ENCODE measurements at regions of chr15 and their contacts with region 1.

Region 1: DNA sequence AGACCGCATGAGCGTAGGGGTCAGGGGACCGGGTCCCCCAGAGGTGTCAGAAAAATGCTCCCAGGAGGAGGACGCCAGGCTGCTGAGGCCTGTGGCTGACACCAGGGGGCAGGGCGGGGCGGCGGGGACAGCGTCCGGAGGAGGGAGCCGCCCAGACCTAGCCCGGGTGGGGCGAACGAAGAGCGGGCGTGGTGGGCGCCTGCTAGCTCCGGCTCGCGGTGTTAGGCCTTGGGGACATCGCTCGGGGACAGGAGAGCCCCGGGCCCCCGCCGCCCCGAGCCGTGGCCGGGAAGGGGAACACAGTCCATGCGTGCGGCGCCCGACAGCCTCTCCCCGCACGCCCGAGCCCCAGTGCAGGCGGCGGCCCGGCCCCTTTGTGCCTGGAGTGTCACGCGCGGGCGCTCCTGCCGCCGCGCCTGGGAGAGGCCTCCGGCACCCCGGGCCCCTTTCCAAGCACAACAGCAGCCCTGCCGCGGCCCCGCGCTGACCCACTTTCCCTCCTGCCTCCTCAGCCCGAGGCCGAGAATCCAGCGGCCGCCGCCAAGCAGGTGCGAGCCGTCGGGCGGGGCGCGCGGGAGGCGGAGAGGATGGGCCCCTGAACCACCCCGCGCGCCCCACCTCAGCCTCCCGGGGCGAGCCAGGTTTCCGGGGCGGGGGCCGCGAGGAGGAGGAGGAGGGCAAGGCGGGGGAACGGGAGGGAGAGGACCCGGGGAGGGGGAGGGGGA is 111.0 kb upstream of the KLF13 start:
- DNase-seq: peak; percentile 86
- ATAC-seq: peak; percentile 80
- H3K4me3 Mint-ChIP-seq: peak overlapping the region; percentile 88
- H3K27ac Mint-ChIP-seq: peak overlapping the region; percentile 93
- H3K4me1 Mint-ChIP-seq: peaks cover 44% of the 10 kb centered on the region
- H3K27me3 Mint-ChIP-seq: no peaks in the 10 kb centered on the region
- CTCF ChIP-seq: no peak

Region 2: GRCh38 chr15:31145271-31145911 is 70.3 kb before region 1 on chr15:
- CTCF ChIA-PET with region 1: no interaction called
- POLR2A ChIA-PET with region 1: no interaction called
- intact Hi-C with region 1: no loop called
- DNase-seq: no peak
- ATAC-seq: no peak
- H3K4me3 Mint-ChIP-seq: no peak overlapping the region
- H3K27ac Mint-ChIP-seq: no peak overlapping the region
- H3K4me1 Mint-ChIP-seq: no peaks in the 10 kb centered on the region
- H3K27me3 Mint-ChIP-seq: peaks cover 2% of the 10 kb centered on the region
- CTCF ChIP-seq: no peak

Region 3: DNA sequence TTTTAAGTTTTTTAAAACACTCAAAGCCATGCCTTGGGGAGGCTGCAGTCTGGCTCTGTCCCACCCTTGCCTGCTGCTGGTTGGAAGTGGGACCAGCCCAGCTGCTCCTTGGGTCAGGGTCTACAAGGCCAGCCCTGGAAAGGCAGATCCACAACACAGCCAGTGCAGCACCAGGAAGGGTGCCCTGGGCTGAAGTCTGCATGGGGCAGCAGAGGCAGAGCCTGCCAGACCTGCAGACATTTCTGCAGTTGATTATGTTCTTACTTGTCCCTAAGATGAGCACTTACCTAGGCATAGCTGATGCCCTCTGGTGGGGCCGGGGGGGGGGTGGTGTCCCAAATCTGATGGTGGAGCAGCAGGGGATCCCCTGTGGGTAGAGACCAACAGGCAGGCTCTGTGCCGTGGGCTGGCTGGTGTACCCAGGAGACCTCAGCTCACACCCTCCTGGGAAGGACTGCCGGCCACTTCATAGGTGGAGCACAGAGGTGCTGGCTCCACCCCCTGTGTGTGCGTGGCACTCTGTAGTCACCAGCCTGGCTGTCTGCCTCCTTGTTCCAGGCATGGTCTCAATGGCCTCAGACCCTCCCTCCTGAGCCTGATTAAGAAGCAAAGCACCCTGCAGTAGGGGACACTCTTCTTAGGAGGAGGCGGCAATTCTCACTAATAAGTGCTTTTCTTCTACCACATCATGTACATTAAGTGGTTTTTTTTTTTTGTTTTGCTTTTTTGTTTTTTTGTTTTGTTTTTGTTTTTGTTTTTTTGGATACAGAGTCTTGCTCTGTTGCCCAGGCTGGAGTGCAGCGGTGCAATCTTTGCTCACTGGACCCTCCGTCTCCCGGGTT is 13.6 kb after region 1 on chr15:
- CTCF ChIA-PET with region 1: interaction called, 25 read pairs
- POLR2A ChIA-PET with region 1: interaction called, 47 read pairs
- intact Hi-C with region 1: loop called (anchors 1 kb)
- DNase-seq: peak; percentile 52
- ATAC-seq: peak; percentile 64
- H3K4me3 Mint-ChIP-seq: peak overlapping the region; percentile 85
- H3K27ac Mint-ChIP-seq: peak overlapping the region; percentile 98
- H3K4me1 Mint-ChIP-seq: peaks cover 96% of the 10 kb centered on the region
- H3K27me3 Mint-ChIP-seq: no peaks in the 10 kb centered on the region
- CTCF ChIP-seq: no peak

Region 4: DNA sequence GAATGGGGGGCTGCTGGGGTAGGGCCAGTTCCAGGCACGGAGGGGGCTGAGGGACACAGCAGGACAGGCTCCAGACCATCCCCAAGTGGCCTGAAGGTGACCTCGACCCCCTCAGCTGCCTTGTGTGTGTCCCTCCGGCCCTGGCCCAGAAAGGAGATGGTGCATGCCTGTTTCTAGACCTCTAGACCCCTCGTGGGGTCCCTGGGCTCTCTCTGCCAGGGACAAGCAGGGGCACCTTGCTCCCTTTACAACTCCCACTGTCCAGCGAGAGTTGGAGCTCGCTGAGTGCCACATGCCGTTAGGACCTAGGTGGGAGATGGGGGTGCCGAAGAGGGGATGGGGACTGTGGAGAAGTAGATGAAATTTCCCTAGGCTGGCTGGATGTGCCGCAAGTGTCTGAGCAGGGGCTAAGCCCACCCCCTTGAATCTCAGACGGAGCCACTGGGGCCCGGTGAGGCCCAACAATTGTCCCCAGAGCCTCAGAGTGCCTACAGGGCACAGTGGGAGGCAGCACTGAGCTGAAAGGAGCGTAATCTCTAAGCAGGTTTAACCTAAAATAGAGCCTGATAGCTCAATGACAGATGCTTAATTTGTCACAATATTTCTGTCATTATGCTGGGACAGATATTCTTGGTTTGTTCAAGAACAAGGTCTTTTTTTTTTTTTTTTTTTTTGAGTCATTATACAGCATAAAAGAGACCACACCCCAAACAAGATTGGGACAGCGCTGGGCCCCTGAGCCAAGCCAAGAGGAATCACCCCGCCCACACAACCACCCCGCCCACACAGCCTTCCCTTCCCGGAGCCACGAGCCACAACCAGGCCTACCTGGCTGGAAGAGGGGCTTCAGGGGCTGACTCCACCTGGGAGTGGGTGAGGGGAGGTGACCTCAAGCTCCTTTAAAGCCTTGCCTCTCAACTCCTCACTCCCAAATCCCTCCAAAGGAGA is 87.4 kb after region 1 on chr15:
- CTCF ChIA-PET with region 1: interaction called, 16 read pairs
- POLR2A ChIA-PET with region 1: interaction called, 9 read pairs
- intact Hi-C with region 1: loop called (anchors 1 kb)
- DNase-seq: no peak
- ATAC-seq: peak; percentile 38
- H3K4me3 Mint-ChIP-seq: no peak overlapping the region
- H3K27ac Mint-ChIP-seq: peak overlapping the region; percentile 24
- H3K4me1 Mint-ChIP-seq: peaks cover 40% of the 10 kb centered on the region
- H3K27me3 Mint-ChIP-seq: no peaks in the 10 kb centered on the region
- CTCF ChIP-seq: no peak

Region 5: DNA sequence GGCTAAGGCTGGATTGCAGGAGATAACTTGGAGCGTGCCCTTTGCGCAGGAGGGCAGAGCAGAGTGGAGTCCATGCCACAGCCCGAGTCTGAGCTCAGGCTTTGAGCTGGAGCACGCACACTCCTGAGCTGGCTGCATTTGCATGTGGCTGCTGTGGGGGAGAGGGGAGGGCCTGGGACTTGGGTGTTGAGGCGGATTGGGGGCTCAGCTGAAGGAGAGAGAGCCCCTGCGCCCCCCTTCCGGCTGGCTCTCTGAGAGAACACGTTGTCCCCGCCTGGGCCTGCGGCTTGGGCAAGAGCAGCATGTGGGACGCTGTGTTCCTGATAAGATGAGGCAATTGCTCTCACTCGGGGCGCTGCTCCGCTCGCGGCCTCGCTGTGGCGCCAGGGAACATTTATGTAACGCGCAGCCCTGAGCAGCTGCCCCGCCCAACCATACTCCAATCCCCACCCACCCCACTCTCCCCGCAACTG is 150.0 kb after region 1 on chr15:
- CTCF ChIA-PET with region 1: interaction called, 10 read pairs
- POLR2A ChIA-PET with region 1: interaction called, 7 read pairs
- intact Hi-C with region 1: loop called (anchors 1 kb)
- DNase-seq: peak; percentile 48
- ATAC-seq: peak; percentile 48
- H3K4me3 Mint-ChIP-seq: peak overlapping the region; percentile 67
- H3K27ac Mint-ChIP-seq: peak overlapping the region; percentile 66
- H3K4me1 Mint-ChIP-seq: peaks cover 99% of the 10 kb centered on the region
- H3K27me3 Mint-ChIP-seq: no peaks in the 10 kb centered on the region
- CTCF ChIP-seq: no peak

Region 6: GRCh38 chr15:31472636-31473384 is 257.2 kb after region 1 on chr15:
- CTCF ChIA-PET with region 1: interaction called, 3 read pairs
- POLR2A ChIA-PET with region 1: interaction called, 4 read pairs
- intact Hi-C with region 1: loop called (anchors 5 kb)
- DNase-seq: no peak
- ATAC-seq: peak; percentile 80
- H3K4me3 Mint-ChIP-seq: peak overlapping the region; percentile 80
- H3K27ac Mint-ChIP-seq: peak overlapping the region; percentile 93
- H3K4me1 Mint-ChIP-seq: peaks cover 45% of the 10 kb centered on the region
- H3K27me3 Mint-ChIP-seq: no peaks in the 10 kb centered on the region
- CTCF ChIP-seq: no peak

Measured in activated B cell treated with CpG ODN at 0.5 μM for 24 hours (primary cell).